ENCODE measurements at regions of chr10 and their contacts with region 1.

Region 1: GRCh38 chr10:104925232-104925851 is 284.3 kb downstream of the SORCS3 start:
- DNase-seq: peak; percentile 72
- H3K4me3 Mint-ChIP-seq: no peak overlapping the region
- H3K27ac Mint-ChIP-seq: no peak overlapping the region
- H3K4me1 Mint-ChIP-seq: no peaks in the 10 kb centered on the region
- H3K27me3 Mint-ChIP-seq: no peaks in the 10 kb centered on the region
- CTCF ChIP-seq: peak; percentile 70

Region 2: DNA sequence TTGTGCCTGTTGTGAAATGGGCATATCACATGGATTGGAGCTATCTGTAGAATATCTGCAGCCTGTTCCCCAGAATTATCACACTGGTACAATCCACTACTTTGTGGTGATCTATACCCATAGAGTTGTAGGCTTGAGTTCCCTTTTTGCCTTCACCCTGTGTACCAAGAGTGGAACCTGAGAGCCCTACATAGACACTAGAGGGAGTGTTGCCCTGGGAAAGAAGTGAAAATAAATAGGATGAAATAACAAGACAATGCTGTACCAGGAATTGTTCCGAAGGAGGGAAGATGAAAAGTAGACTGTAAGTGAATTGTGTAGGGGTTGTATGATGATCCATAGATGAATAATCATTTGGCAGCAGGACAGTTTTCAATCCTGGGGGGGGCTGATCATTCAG is 275.3 kb before region 1 on chr10:
- CTCF ChIA-PET with region 1: interaction called, 6 read pairs
- POLR2A ChIA-PET with region 1: no interaction called
- intact Hi-C with region 1: loop called (anchors 2 kb)
- DNase-seq: peak; percentile 35
- H3K4me3 Mint-ChIP-seq: no peak overlapping the region
- H3K27ac Mint-ChIP-seq: no peak overlapping the region
- H3K4me1 Mint-ChIP-seq: no peaks in the 10 kb centered on the region
- H3K27me3 Mint-ChIP-seq: peaks cover 15% of the 10 kb centered on the region
- CTCF ChIP-seq: peak; percentile 39

Region 3: DNA sequence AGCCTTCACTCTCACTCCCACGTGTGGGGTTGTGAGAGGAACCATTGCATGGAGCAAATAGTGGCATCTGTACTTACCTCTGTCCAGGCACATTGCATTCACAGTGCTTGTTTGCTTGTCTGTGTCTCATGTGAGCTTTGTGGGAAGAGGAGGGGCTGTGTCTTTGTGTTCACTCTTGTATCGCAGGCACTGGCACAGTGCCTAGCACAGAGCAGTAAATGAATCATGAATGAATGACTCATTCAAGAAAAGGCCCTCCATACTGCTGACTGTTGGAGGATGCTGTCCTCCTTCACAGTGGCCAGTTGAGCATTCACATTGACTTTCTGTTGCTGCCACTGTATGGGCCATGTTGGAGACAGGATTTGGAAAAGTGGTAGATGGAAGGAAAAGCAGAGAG is 159.0 kb before region 1 on chr10:
- CTCF ChIA-PET with region 1: interaction called, 25 read pairs
- POLR2A ChIA-PET with region 1: no interaction called
- intact Hi-C with region 1: loop called (anchors 1 kb)
- DNase-seq: peak; percentile 92
- H3K4me3 Mint-ChIP-seq: no peak overlapping the region
- H3K27ac Mint-ChIP-seq: peak overlapping the region; percentile 28
- H3K4me1 Mint-ChIP-seq: peaks cover 17% of the 10 kb centered on the region
- H3K27me3 Mint-ChIP-seq: no peaks in the 10 kb centered on the region
- CTCF ChIP-seq: no peak

Region 4: DNA sequence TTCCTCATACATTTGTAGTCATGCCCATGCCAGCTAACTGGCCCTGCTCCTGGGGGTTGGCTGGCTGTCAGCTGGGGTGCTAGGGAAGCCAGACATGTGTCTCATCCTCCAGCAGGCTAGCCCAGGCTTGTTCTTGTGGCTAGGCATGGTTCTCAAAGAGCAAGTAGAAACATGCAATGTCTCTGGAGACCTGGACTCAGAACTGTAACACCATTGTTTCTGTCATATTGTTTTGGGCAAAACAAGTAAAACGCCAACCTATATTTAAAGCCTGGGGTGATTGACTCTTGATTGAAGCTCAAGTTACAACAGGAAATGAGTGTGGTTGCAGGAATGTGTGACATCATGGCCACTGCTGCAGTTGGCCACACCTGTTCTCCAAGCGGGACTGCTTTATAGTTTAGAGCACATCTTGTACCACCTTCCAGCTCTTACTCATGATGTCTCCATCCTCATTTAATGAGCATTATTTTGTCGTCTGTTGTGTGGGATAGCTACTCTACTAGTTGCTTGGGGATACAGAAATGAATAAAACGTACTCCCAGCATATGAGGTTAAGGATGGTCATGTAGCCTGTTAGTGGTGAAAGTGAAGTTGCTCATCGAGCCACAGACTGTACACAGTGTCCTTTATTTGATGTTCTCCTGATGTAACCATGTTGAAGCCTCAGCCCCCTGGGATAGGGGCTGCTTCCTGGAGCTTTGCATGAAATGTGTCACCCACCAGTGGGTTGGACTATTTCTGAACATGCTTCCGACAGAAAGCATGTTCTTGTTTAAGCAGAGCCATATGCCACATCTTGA is 115.9 kb before region 1 on chr10:
- CTCF ChIA-PET with region 1: interaction called, 3 read pairs
- POLR2A ChIA-PET with region 1: no interaction called
- intact Hi-C with region 1: loop called (anchors 5 kb)
- DNase-seq: peak; percentile 99
- H3K4me3 Mint-ChIP-seq: no peak overlapping the region
- H3K27ac Mint-ChIP-seq: peak overlapping the region; percentile 91
- H3K4me1 Mint-ChIP-seq: peaks cover 34% of the 10 kb centered on the region
- H3K27me3 Mint-ChIP-seq: no peaks in the 10 kb centered on the region
- CTCF ChIP-seq: no peak

Region 5: GRCh38 chr10:104907517-104907916 is 17.8 kb before region 1 on chr10:
- CTCF ChIA-PET with region 1: interaction called, 10 read pairs
- POLR2A ChIA-PET with region 1: no interaction called
- intact Hi-C with region 1: no loop called
- DNase-seq: no peak
- H3K4me3 Mint-ChIP-seq: no peak overlapping the region
- H3K27ac Mint-ChIP-seq: no peak overlapping the region
- H3K4me1 Mint-ChIP-seq: no peaks in the 10 kb centered on the region
- H3K27me3 Mint-ChIP-seq: peaks cover 4% of the 10 kb centered on the region
- CTCF ChIP-seq: no peak

Region 6: GRCh38 chr10:105398202-105398601 is 472.9 kb after region 1 on chr10:
- CTCF ChIA-PET with region 1: no interaction called
- POLR2A ChIA-PET with region 1: no interaction called
- intact Hi-C with region 1: no loop called
- DNase-seq: no peak
- H3K4me3 Mint-ChIP-seq: no peak overlapping the region
- H3K27ac Mint-ChIP-seq: no peak overlapping the region
- H3K4me1 Mint-ChIP-seq: no peaks in the 10 kb centered on the region
- H3K27me3 Mint-ChIP-seq: no peaks in the 10 kb centered on the region
- CTCF ChIP-seq: no peak